ENCODE measurements at regions of chr15 and their contacts with region 1.

Region 1: DNA sequence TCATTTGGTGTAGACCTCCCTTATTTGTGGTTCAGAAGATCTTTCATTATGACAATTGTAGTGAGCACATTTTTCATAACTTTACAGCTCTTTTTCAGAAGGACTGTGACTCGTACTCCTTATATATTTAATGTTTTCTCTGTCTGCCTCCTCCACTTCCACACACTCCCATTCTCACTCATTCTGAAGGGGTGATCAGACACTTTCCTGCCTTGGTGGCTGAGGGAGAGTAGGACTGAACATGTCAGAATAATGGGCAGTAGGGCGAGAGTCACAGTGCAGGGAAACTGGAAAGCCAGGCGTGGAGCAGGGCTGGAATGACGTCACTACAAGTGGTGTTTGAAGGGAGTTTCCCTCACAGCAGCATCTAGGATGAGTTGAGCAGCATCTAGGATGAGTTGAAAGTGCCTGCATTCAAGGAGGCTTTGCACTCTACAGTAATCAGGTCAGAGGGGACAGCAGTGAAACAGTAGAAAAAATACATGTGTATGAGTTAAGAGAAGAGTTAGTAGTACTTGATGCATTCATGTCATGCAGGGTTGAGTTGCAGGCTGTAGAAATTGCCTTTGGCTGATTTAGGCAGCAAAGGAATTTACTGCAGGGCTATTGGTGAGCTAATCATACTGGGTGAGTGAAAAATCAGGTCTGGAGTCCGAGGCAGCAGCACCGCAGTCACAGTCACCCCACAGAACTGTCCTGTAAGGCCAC is 36.3 kb upstream of the FBXL22 start:
- DNase-seq: peak; percentile 82
- H3K4me3 Mint-ChIP-seq: no peak overlapping the region
- H3K27ac Mint-ChIP-seq: peak overlapping the region; percentile 63
- H3K4me1 Mint-ChIP-seq: peaks cover 45% of the 10 kb centered on the region
- H3K27me3 Mint-ChIP-seq: no peaks in the 10 kb centered on the region

Region 2: DNA sequence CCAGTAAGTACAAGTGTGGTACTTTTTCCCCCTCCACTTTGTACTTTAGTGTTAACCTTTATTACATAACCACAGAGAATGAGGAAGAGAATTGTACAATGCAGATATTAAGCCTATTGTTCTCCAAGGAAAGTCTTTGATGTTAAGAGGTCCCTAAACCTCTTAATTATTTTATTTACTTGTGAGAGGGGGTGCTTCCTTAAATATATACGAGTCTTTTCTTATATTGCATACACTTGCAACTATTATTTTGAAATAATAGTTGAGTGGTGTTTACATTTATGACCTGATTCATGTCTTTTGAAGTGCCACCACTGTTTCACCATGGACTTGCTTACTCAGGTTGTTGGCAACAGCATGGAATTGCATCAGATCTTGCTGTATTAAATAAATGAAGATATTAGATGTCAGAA is 46.4 kb before region 1 on chr15:
- CTCF ChIA-PET with region 1: interaction called, 5 read pairs
- POLR2A ChIA-PET with region 1: interaction called, 4 read pairs
- intact Hi-C with region 1: loop called (anchors 1 kb)
- DNase-seq: no peak
- H3K4me3 Mint-ChIP-seq: peak overlapping the region; percentile 6
- H3K27ac Mint-ChIP-seq: peak overlapping the region; percentile 72
- H3K4me1 Mint-ChIP-seq: peaks cover 87% of the 10 kb centered on the region
- H3K27me3 Mint-ChIP-seq: no peaks in the 10 kb centered on the region

Region 3: GRCh38 chr15:63593705-63594671 is 33.1 kb after region 1 on chr15:
- CTCF ChIA-PET with region 1: interaction called, 3 read pairs
- POLR2A ChIA-PET with region 1: interaction called, 3 read pairs
- intact Hi-C with region 1: loop called (anchors 2 kb)
- DNase-seq: peak; percentile 82
- H3K4me3 Mint-ChIP-seq: peak overlapping the region; percentile 6
- H3K27ac Mint-ChIP-seq: peak overlapping the region; percentile 86
- H3K4me1 Mint-ChIP-seq: peaks cover 68% of the 10 kb centered on the region
- H3K27me3 Mint-ChIP-seq: no peaks in the 10 kb centered on the region

Measured in activated CD4-positive, alpha-beta memory T cell treated with anti-CD3 and anti-CD28 coated beads for 36 hours (primary cell).